ENCODE measurements at regions of chr1 and their contacts with region 1.

Region 1: DNA sequence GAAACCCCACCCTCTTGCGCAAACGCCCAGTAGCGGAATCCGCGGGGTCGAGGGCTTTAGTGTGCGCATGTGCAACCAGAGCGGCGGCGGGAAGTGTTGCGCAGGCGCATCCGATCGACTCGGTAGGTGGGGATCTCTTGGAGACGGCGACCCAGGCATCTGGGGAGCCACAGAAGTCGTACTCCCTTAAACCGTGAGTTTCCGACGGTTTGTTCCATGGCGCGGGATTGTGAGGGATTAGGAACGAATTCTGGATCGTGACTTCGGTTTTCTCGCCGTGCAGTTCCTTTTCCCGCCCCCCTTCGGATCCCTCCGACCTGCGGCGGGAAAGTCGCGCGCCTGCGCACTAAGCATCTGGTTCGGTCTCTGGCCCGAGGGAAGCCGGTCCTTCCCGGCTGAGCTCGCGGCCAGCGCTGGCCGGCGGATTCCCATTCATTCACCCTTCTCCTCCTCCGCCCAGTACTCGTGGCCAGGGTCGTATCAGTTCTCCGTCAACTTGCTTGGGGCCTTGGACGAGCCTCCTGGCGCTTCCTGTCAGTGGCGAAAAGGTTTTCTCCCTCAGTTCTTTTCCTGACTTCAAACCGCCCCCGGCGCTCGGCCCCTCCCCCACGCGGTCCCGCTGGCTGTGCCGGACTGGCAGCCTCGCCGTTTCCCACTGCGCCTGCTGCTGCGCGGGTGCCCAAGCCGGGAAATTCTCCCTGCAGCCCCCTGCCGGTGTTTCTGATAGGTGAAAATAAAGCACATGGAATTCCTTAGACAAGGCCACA is at the start of gene CDC7:
- DNase-seq: peak; percentile 87
- H3K4me3 ChIP-seq: peak within 1 kb of the TSS; percentile 47 to 67
- H3K27ac ChIP-seq: peak within 1 kb of the TSS; percentile 83 to 89
- H3K4me1 ChIP-seq: no peaks in the 10 kb centered on the region
- H3K27me3 ChIP-seq: no peaks in the 10 kb centered on the region
- CTCF ChIP-seq: peak in 2 of 4 experiments; percentile 38 to 42
- POLR2A ChIP-seq: no peak
- total RNA-seq, gene CDC7: 0.68 to 6.1 TPM

Region 2: DNA sequence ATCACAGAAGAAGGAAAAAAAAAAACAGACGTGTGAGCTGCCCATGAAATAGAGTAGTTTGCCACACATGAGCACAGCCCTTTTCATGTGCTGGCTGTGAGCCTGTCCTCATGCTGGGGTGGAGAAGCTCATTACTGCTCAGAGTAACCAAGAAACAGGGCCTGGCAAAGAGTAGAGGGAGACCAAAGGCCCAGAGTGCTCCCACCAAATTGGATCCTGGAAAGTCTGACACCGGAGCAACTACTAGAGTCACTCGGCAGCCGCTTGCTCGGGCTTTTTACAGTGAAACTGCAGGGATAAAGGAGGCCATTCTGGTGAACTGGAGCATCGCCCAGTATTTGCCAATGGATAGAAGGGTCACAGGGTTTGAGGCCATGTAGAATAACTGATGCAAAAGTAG is 719.4 kb before region 1 on chr1:
- intact Hi-C with region 1: no loop called
- DNase-seq: no peak
- H3K4me3 ChIP-seq: no peak overlapping the region
- H3K27ac ChIP-seq: no peak overlapping the region
- H3K4me1 ChIP-seq: no peaks in the 10 kb centered on the region
- H3K27me3 ChIP-seq: no peaks in the 10 kb centered on the region
- CTCF ChIP-seq: no peak
- POLR2A ChIP-seq: no peak

Region 3: DNA sequence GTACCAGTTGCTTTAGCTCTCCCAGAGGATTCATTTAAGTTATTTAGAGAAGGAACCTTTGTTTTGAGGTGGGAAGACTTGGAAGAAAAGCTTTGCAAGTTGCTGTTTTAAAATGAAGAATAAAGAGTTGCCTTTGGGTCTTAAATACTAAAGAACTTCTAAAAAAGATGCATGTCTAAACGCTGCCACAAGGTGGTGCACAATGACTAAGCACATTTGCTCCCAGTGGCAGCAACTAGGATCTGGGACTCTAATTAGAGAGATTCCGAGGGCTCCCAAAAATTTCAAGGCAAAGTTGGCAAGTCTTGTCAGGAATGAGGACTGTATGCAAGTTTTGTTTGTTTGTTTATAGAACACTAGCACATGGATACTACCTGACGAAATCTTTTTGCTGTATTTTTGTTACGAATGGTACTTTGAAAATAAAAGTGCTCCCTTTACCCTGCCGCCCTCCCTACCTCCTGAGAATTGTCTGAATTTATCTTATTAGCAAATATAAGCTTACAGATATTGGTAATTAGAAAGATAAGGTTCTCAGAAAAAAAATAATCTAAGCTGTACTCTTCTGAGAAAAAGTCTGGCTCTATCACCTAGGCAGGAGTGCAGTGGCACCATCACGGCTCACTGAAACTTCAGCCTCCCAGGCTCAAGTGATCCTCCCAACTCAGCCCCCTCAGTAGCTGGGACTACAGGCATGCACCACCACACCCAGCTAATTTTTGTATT is 218.1 kb before region 1 on chr1:
- intact Hi-C with region 1: loop called (anchors 5 kb)
- DNase-seq: peak; percentile 54
- H3K4me3 ChIP-seq: no peak overlapping the region
- H3K27ac ChIP-seq: no peak overlapping the region
- H3K4me1 ChIP-seq: no peaks in the 10 kb centered on the region
- H3K27me3 ChIP-seq: no peaks in the 10 kb centered on the region
- CTCF ChIP-seq: peak; percentile 37 to 71 (median 70)
- POLR2A ChIP-seq: no peak

Region 4: GRCh38 chr1:91345395-91346005 is 155.4 kb before region 1 on chr1:
- intact Hi-C with region 1: no loop called
- DNase-seq: no peak
- H3K4me3 ChIP-seq: no peak overlapping the region
- H3K27ac ChIP-seq: no peak overlapping the region
- H3K4me1 ChIP-seq: no peaks in the 10 kb centered on the region
- H3K27me3 ChIP-seq: no peaks in the 10 kb centered on the region
- CTCF ChIP-seq: no peak
- POLR2A ChIP-seq: no peak

Region 5: GRCh38 chr1:91404151-91405012 is 96.6 kb before region 1 on chr1 and contains the start of gene HFM1:
- intact Hi-C with region 1: loop called (anchors 10 kb)
- DNase-seq: peak; percentile 32
- H3K4me3 ChIP-seq: peak within 1 kb of the TSS; percentile 43 to 46
- H3K27ac ChIP-seq: peak within 1 kb of the TSS; percentile 61 to 64
- H3K4me1 ChIP-seq: no peaks in the 10 kb centered on the region
- H3K27me3 ChIP-seq: no peaks in the 10 kb centered on the region
- CTCF ChIP-seq: peak in 1 of 4 experiments; percentile 8
- POLR2A ChIP-seq: no peak
- total RNA-seq, gene HFM1: 0.18 to 4.8 TPM

Region 6: GRCh38 chr1:92298573-92299476 is 797.9 kb after region 1 on chr1 and contains the starts of genes GLMN and RPAP2:
- intact Hi-C with region 1: loop called (anchors 10 kb)
- DNase-seq: peak; percentile 76
- H3K4me3 ChIP-seq: peak within 1 kb of the TSS; percentile 59 to 84
- H3K27ac ChIP-seq: peak within 1 kb of the TSS; percentile 89 to 97
- H3K4me1 ChIP-seq: no peaks in the 10 kb centered on the region
- H3K27me3 ChIP-seq: no peaks in the 10 kb centered on the region
- CTCF ChIP-seq: no peak
- POLR2A ChIP-seq: peak; percentile 89
- total RNA-seq, gene GLMN: 4.7 to 9.5 TPM
- total RNA-seq, gene RPAP2: 6.5 to 11.0 TPM

Measured in prostate gland (tissue), 2 donors.